Colonic mucosa (tissue), 4 donors: ENCODE measurements at regions of chr6 and their contacts with region 1.

Region 1: GRCh38 chr6:105733565-105734162 is 330.8 kb upstream of the PREP start:
- DNase-seq: no peak
- H3K4me3 ChIP-seq: no peak overlapping the region
- H3K27ac ChIP-seq: no peak overlapping the region
- H3K4me1 ChIP-seq: no peaks in the 10 kb centered on the region
- H3K27me3 ChIP-seq: no peaks in the 10 kb centered on the region
- CTCF ChIP-seq: peak; percentile 62

Region 2: GRCh38 chr6:105445481-105445880 is 288.2 kb before region 1 on chr6:
- intact Hi-C with region 1: no loop called
- DNase-seq: no peak
- H3K4me3 ChIP-seq: no peak overlapping the region
- H3K27ac ChIP-seq: no peak overlapping the region
- H3K4me1 ChIP-seq: no peaks in the 10 kb centered on the region
- H3K27me3 ChIP-seq: no peaks in the 10 kb centered on the region
- CTCF ChIP-seq: no peak

Region 3: DNA sequence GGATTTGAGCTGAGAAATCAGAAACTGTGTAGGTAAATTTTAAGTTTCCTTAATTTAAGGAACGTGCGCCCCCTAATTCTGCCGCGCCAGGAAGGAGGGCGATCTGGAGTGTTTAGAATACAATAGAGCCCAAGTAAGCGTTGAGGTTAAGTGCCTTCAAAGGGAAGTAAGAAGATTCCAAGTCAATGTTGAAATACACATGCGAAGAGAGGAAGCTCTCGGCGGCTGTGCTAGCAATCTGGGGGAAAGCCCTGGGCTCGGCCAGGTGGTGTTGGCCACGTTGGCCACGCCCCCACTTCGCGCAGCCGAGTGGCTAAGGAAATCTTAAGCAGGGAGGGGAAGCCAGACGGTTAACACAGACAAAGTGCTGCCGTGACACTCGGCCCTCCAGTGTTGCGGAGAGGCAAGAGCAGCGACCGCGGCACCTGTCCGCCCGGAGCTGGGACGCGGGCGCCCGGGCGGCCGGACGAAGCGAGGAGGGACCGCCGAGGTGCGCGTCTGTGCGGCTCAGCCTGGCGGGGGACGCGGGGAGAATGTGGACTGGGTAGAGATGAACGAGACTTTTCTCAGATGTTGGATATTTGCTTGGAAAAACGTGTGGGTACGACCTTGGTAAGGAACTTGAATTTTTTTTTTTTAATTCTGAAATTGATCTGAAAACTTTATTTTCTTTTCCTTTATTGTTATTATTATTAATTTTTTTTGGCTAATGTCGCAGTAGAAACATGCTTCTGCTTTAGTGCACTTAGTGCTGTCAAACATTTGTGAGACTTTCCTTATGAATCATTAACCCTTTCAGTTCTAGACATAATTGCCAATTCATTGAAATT is 352.5 kb after region 1 on chr6 and contains the start of gene PRDM1:
- intact Hi-C with region 1: loop called (anchors 5 kb)
- DNase-seq: peak; percentile 92
- H3K4me3 ChIP-seq: peak within 1 kb of the TSS; percentile 41
- H3K27ac ChIP-seq: peak within 1 kb of the TSS; percentile 60
- H3K4me1 ChIP-seq: peaks cover 5% of the 10 kb centered on the region
- H3K27me3 ChIP-seq: no peaks in the 10 kb centered on the region
- CTCF ChIP-seq: no peak
- total RNA-seq, gene PRDM1: 7.2 to 17.6 TPM

Region 4: DNA sequence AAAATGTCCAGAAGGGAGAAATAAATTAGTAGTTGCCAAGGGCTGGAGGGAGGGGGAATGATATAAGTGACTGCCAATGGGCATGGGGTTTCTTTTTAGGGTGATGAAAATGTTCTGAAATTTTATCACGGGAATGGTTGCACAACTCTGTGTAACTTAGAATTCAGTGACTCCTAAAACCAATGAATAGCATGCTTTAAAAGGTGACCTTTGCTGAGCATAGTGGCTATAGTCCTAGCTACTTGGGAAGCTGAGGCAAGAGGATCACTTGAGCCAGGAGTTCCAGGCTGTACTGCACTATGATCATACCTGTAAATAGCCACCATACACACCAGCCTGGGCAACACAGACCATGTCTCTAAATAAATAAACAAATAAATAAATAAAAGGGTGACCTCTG is 482.9 kb after region 1 on chr6:
- intact Hi-C with region 1: loop called (anchors 10 kb)
- DNase-seq: no peak
- H3K4me3 ChIP-seq: no peak overlapping the region
- H3K27ac ChIP-seq: no peak overlapping the region
- H3K4me1 ChIP-seq: no peaks in the 10 kb centered on the region
- H3K27me3 ChIP-seq: no peaks in the 10 kb centered on the region
- CTCF ChIP-seq: no peak

Region 5: DNA sequence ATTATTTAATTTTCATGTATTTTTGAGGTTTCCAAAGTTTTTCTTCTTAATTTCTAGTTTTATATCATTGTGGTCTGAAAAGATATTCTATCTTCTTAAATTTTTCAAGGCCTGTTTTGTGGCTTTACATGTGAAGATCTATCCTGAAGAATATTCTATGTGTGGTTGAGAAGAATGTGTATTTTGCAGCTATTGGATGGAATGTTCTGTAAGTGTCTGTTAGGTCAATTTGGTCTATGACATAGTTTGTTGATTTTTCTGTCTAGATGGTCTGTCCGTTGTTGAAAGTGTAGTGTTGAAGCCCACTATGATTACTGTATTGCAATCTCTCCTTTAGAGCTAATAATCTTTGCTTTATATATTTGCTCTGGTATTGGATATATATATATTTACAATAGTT is 752.6 kb after region 1 on chr6:
- intact Hi-C with region 1: no loop called
- DNase-seq: no peak
- H3K4me3 ChIP-seq: no peak overlapping the region
- H3K27ac ChIP-seq: no peak overlapping the region
- H3K4me1 ChIP-seq: no peaks in the 10 kb centered on the region
- H3K27me3 ChIP-seq: no peaks in the 10 kb centered on the region
- CTCF ChIP-seq: no peak